Gastrocnemius medialis (tissue), 4 donors: ENCODE measurements at regions of chr17 and their contacts with region 1.

Region 1: GRCh38 chr17:21275579-21276263 is 8.8 kb upstream of the MAP2K3 start:
- DNase-seq: peak; percentile 88 to 93
- ATAC-seq: peak; percentile 74 to 76
- H3K4me3 ChIP-seq: peak overlapping the region; percentile 59 to 80 (median 64)
- H3K27ac ChIP-seq: peak overlapping the region; percentile 75 to 94 (median 82)
- H3K4me1 ChIP-seq: peaks cover 31 to 33% of the 10 kb centered on the region in 2 donors
- H3K27me3 ChIP-seq: no peaks in the 10 kb centered on the region
- CTCF ChIP-seq: no peak
- POLR2A ChIP-seq: peak; percentile 71 to 80

Region 2: DNA sequence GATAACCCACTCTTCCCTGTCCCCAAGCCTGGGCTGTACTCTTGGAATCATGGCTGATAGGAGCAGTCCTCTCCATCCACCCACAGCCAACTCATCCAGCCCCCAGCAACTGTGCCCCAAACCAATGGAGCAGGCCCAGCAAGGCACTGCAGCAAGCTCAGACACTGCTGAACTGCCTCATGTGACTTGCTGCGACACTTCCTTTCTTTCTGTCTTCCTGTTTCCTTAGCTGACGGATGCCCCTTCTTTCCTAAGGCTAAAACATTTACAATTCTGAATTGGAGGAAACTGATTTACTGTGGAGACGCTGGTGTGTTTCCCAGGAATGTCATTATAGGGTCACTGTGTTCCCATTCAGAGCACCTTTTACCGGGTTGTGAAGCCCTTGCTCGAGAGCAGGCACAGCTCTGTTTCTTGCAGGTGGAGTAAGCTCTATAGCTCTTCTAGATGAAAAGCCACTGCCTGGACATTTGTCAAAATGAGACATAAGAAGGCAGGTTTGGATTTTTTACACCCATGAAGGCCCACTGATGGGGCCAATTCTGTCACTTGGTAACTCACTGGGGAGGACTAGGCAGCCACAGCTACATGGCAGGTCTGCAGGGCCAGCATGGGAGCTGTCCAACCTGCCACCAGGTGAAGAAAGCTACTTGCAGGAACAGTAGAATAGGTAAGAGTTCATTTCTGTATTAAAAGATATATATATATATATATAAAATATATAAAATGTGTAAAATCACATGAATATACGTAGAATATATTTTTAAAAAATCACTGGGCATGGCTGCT is 89.1 kb before region 1 on chr17:
- in situ Hi-C with region 1: no loop called
- intact Hi-C with region 1: no loop called
- DNase-seq: no peak
- ATAC-seq: no peak
- H3K4me3 ChIP-seq: no peak overlapping the region
- H3K27ac ChIP-seq: peak overlapping the region; percentile 5 to 94 (median 44)
- H3K4me1 ChIP-seq: peaks cover 40 to 64% of the 10 kb centered on the region in 2 donors
- H3K27me3 ChIP-seq: no peaks in the 10 kb centered on the region
- CTCF ChIP-seq: no peak
- POLR2A ChIP-seq: no peak

Region 3: DNA sequence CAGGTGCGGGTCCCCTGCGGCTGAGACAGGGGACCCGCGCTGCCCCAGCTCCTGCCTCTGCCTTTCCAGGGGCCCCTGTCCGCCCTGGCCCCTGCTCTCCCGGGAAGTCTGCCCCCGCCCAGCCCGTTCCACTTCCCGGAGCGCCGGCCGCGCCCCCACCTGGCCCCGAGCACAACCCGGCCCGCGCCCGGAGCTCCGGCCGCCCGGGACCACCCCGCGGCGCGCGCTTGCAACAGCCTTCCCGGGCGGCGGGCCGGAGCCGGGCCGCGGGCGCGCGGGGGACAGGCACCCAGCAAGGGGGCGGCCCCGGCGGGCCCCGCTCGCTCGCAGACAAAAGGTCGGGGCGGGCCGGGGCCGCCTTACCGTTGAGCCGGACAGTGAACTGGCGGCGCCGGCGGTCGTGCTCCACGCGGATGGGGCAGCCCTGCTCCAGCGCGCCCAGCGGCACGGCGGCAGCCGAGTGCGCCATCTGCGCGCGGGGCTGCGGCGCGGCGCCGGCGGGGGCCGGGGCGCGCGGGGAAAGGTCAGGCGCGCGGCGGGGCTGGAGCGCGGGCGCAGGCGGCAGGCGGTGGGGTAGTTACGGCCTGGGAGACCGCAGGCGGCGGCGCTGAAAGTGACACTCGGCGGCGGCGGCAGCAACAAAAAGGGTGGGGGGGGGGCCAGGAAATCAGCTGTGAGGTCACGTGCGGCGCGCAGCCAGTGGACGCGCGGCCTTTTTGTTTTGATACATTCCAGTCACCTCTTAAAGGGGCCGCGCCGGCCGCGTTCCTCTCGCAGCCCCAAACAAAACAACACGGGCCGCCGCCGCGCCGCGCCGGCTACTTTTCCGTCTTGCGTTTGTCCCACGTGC is 22.7 kb before region 1 on chr17 and contains the start of gene NATD1:
- in situ Hi-C with region 1: no loop called
- intact Hi-C with region 1: loop called (anchors 2 kb)
- DNase-seq: peak; percentile 88 to 93
- ATAC-seq: peak; percentile 67 to 79
- H3K4me3 ChIP-seq: peak within 1 kb of the TSS; percentile 66 to 80 (median 70)
- H3K27ac ChIP-seq: peak within 1 kb of the TSS; percentile 89 to 95 (median 92)
- H3K4me1 ChIP-seq: peaks cover 45 to 51% of the 10 kb centered on the region in 2 donors
- H3K27me3 ChIP-seq: no peaks in the 10 kb centered on the region
- CTCF ChIP-seq: no peak
- POLR2A ChIP-seq: peak; percentile 86 to 91
- total RNA-seq, gene NATD1: 10.1 to 21.2 (median 15.5) TPM

Region 4: DNA sequence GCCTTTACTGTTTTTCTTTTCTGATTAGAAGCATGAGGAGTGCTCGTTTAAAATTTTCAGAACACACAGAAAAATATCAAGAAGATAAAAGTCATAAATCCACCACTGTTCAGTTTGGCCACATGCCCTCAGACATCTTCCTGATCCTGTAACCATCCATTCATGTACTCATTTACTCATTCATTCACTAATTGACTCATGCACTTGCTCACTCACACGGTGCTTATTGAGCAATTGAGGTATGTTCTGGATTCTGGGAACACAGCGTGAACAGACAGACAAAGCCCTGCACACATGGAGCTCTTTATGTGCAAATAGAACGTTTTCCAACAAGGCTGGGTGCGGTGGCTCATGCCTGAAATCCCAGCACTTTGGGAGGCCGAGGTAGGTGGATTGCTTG is 12.4 kb before region 1 on chr17:
- in situ Hi-C with region 1: no loop called
- intact Hi-C with region 1: loop called (anchors 2 kb)
- DNase-seq: no peak
- ATAC-seq: peak; percentile 56 to 90
- H3K4me3 ChIP-seq: no peak overlapping the region
- H3K27ac ChIP-seq: peak overlapping the region in 2 of 4 donors; percentile 9 to 57
- H3K4me1 ChIP-seq: peaks cover 6 to 21% of the 10 kb centered on the region in 2 donors
- H3K27me3 ChIP-seq: no peaks in the 10 kb centered on the region
- CTCF ChIP-seq: no peak
- POLR2A ChIP-seq: no peak

Region 5: DNA sequence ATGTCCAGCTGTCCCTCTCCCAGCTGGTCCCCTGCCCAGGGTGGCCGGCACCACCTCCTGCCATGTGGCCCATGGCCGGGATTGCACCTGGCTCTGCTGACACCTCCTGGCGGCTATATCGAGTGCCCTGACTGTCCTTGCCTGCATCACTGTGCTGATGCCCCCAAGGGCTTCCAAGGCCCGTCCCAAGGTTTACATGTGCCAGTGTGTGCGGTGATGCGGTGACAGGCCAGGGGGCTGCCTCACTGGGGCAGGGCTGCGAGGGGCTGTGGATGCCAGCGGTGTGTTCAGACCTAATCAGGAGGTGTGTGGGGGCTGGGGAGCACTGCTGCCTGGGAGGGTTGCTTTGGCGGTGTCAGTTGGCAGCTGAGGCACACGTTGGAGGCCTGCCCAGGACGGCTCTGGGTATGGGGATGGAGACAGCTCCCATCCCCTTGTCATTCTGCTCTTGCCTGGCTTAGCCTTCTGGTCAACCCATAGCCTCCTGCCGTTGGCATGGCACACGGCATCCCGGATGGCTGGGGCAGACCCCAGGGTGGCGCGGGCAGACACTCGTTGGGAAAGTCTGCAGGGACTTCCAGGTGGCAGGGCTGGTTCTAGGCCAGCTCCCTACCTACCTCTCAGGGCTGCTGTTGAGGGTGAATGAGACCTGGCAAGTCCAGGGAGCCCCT is 14.3 kb after region 1 on chr17:
- in situ Hi-C with region 1: no loop called
- intact Hi-C with region 1: loop called (anchors 1 kb)
- DNase-seq: peak; percentile 87 to 97
- ATAC-seq: peak; percentile 42 to 43
- H3K4me3 ChIP-seq: no peak overlapping the region
- H3K27ac ChIP-seq: peak overlapping the region; percentile 94 to 99 (median 97)
- H3K4me1 ChIP-seq: peaks cover 59 to 60% of the 10 kb centered on the region in 2 donors
- H3K27me3 ChIP-seq: no peaks in the 10 kb centered on the region
- CTCF ChIP-seq: peak in 4 of 5 experiments; percentile 36 to 67 (median 61)
- POLR2A ChIP-seq: peak; percentile 36 to 59

Region 6: DNA sequence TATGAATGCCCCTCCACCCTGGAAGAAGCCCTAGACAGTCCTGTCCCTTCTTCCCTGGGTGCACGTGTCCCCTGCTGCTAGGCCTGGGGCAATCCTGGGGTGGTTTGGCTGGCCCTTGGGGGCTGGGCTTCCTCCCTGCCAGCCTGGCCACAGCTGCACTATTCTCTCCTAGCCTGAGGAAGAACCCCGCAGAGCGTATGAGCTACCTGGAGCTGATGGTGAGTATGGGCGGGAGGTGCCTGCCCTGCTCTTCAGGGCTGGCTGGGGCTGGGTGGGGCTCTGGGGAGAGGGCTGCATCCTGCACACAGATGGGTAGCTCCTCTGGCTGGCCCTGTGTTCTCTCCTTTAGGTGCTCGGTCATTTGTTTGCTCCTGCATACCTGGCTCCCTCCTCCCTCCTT is 37.6 kb after region 1 on chr17:
- in situ Hi-C with region 1: no loop called
- intact Hi-C with region 1: loop called (anchors 5 kb)
- DNase-seq: no peak
- ATAC-seq: no peak
- H3K4me3 ChIP-seq: no peak overlapping the region
- H3K27ac ChIP-seq: no peak overlapping the region
- H3K4me1 ChIP-seq: peaks cover 0 to 12% of the 10 kb centered on the region in 2 donors
- H3K27me3 ChIP-seq: no peaks in the 10 kb centered on the region
- CTCF ChIP-seq: no peak
- POLR2A ChIP-seq: no peak